ENCODE measurements at regions of chr15 and their contacts with region 1.

Region 1: DNA sequence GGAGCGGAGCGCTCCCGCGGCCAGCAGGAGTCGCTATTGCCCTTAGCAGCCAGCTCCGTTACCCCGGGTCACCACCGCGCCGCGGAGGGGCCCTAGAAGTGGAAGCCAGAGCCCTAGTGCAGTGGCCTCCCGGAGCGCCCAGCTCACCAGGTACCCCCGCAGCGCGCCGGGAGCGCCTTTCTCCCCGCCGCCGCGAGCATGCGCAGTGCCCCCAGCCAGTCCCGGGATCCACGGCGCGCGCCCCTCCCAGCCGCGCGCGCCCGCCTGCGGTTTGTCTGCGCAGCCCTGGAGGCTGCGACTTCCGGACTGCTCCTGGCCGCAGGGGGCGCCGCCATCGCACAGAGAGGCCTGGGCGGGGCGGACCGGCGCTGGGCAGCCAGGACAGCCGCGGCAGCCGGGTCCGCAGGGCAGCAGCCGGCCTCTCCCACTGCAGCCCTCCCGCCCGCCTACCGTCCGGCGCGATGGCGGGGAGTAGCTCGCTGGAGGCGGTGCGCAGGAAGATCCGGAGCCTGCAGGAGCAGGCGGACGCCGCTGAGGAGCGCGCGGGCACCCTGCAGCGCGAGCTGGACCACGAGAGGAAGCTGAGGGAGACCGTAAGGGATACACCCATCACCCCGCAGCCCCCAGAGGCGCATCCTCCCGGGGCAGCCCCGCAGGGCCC is 5.7 kb downstream of the TPM1 start:
- DNase-seq: peak; percentile 97
- H3K4me3 ChIP-seq: peak overlapping the region; percentile 64 to 83
- H3K27ac ChIP-seq: peak overlapping the region; percentile 91 to 93
- H3K4me1 ChIP-seq: peaks cover 36 to 53% of the 10 kb centered on the region in 2 experiments
- H3K27me3 ChIP-seq: no peaks in the 10 kb centered on the region
- CTCF ChIP-seq: peak; percentile 93
- EP300 ChIP-seq: no peak; a peak in 1 of 4 replicates
- RAD21 ChIP-seq: peak; percentile 80

Region 2: GRCh38 chr15:62795171-62795570 is 253.1 kb before region 1 on chr15:
- CTCF ChIA-PET with region 1: interaction called, 12 read pairs
- POLR2A ChIA-PET with region 1: no interaction called
- DNase-seq: no peak
- H3K4me3 ChIP-seq: no peak overlapping the region
- H3K27ac ChIP-seq: no peak overlapping the region
- H3K4me1 ChIP-seq: no peaks in the 10 kb centered on the region; a peak in 1 of 4 replicates
- H3K27me3 ChIP-seq: no peaks in the 10 kb centered on the region
- CTCF ChIP-seq: no peak
- EP300 ChIP-seq: no peak
- RAD21 ChIP-seq: no peak

Region 3: DNA sequence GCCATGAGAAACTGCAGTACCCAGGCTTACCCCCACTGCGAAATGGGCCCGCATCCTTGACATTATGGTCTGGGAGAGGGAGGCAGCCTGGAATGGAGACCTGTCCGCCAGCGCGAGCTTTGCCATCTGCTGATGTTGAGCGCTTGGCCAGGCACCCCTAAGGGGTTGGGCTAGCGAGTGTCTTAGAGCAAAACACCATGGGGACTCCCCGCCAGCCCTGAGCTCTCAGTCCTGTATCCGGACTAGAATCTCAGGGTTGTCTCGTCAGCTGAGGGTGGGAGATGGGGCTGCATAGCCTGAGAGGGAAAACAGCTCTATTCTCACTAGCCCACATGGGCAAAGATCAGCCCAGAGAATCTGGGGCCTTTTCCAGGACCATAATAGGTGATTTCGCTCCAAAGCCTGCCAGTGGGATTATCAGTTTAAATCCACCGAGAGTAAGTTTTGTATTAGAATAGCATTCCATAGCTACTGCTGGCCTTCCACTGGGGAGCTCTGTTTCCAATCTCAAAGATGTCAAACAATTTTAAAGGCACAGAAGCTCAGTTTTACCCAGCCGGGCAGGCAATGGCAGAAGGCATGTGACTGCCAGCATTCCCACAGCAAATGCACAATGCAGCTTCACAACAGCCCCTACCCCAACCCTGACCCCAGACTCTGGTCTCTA is 173.2 kb before region 1 on chr15:
- CTCF ChIA-PET with region 1: interaction called, 20 read pairs
- POLR2A ChIA-PET with region 1: no interaction called
- DNase-seq: no peak
- H3K4me3 ChIP-seq: no peak overlapping the region
- H3K27ac ChIP-seq: peak overlapping the region; percentile 47 to 78; a peak in 3 of 4 replicates
- H3K4me1 ChIP-seq: peaks cover 25 to 47% of the 10 kb centered on the region in 2 experiments
- H3K27me3 ChIP-seq: no peaks in the 10 kb centered on the region
- CTCF ChIP-seq: no peak
- EP300 ChIP-seq: peak in 1 of 2 experiments; percentile 68; a peak in 1 of 4 replicates
- RAD21 ChIP-seq: no peak

Region 4: DNA sequence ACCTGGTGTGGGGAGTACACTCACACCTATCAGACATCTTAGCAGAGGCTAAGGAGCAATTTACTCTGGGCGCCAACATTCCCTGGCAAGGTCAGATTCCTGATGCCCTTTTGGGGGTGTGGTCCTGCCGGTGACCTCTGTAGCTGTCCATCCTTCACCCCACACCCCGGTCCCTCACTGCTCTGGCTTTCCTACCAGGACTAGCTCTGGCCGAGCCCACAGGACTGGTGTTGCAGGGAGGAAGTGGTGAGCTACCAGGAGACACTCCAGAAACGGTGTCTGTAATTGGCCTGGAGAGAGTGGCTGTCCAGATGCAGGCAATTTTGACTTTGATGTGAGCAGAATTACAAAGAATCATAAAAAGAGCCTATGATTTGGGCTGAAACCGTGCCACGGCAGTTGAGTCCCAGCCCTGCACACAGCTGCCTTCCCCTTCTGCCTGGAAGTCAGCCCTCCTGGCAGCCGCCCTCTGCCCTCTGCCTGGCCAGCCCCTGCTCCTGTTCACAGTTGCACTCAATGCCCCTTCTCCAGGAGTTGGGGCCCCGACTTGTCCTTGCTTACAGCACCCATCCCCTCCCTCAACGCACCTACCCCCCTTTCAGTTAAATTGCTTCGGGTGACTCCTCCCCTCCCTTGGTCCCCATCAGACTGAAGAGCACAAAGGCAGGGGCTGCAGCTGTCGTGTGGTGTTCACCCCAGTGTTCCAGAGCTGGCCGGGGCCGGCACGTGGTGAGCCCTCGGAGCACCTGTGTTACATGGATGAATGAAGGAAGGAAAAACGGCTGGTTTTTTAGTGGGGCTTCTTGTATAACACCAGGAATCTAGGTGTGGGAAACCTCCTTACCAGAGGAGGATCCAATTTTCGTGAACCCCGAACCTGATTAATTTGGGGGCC is 85.9 kb before region 1 on chr15:
- CTCF ChIA-PET with region 1: interaction called, 10 read pairs
- POLR2A ChIA-PET with region 1: no interaction called
- DNase-seq: no peak
- H3K4me3 ChIP-seq: no peak overlapping the region
- H3K27ac ChIP-seq: no peak overlapping the region; a peak in 1 of 4 replicates
- H3K4me1 ChIP-seq: peaks cover 7 to 12% of the 10 kb centered on the region in 2 experiments; a peak in 3 of 4 replicates
- H3K27me3 ChIP-seq: no peaks in the 10 kb centered on the region
- CTCF ChIP-seq: no peak
- EP300 ChIP-seq: no peak
- RAD21 ChIP-seq: no peak

Region 5: GRCh38 chr15:63093486-63094205 is 45.4 kb after region 1 on chr15:
- CTCF ChIA-PET with region 1: interaction called, 315 read pairs
- POLR2A ChIA-PET with region 1: interaction called, 12 read pairs
- DNase-seq: peak; percentile 87
- H3K4me3 ChIP-seq: no peak overlapping the region; a peak in 1 of 4 replicates
- H3K27ac ChIP-seq: peak overlapping the region; percentile 68 to 78; a peak in 3 of 4 replicates
- H3K4me1 ChIP-seq: peaks cover 21 to 25% of the 10 kb centered on the region in 2 experiments; a peak in 3 of 4 replicates
- H3K27me3 ChIP-seq: no peaks in the 10 kb centered on the region
- CTCF ChIP-seq: peak; percentile 88
- EP300 ChIP-seq: no peak
- RAD21 ChIP-seq: peak; percentile 100

Region 6: GRCh38 chr15:63165166-63165859 is 117.1 kb after region 1 on chr15:
- CTCF ChIA-PET with region 1: no interaction called
- POLR2A ChIA-PET with region 1: no interaction called
- DNase-seq: no peak
- H3K4me3 ChIP-seq: no peak overlapping the region
- H3K27ac ChIP-seq: no peak overlapping the region
- H3K4me1 ChIP-seq: no peaks in the 10 kb centered on the region; a peak in 1 of 4 replicates
- H3K27me3 ChIP-seq: no peaks in the 10 kb centered on the region
- CTCF ChIP-seq: no peak
- EP300 ChIP-seq: no peak
- RAD21 ChIP-seq: no peak